PC-3 (cell line): ENCODE measurements at regions of chrX and their contacts with region 1.

Region 1: GRCh38 chrX:41923257-41923969 is at the start of gene CASK:
- DNase-seq: peak; percentile 91
- ATAC-seq: peak; percentile 84
- H3K4me3 ChIP-seq: peak within 1 kb of the TSS; percentile 98
- H3K27ac ChIP-seq: peak within 1 kb of the TSS; percentile 56
- H3K4me1 ChIP-seq: no peaks in the 10 kb centered on the region; the same call in 1 of the 2 replicates
- H3K27me3 ChIP-seq: no peaks in the 10 kb centered on the region
- CTCF ChIP-seq: no peak
- total RNA-seq, gene CASK: 21.4 and 24.8 TPM in 2 replicates

Region 2: DNA sequence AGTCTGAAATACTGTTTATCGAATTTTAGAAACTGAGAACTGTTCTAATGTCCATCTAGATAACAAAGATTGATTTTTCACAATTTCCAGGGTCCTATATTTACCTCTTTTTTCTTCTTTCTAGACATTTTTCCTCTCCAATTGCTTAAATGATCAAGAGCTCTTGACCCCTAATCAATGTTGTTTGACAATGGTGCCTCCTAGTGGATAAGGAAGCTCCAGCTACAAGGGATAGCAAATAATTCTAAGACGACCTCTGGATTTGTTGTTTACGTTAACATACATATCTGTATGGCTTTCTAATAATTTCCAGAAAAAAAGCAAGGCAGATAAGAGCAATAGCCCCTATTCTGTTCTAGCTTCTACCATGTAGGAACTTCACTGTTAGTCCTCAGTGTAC is 163.6 kb before region 1 on chrX:
- CTCF ChIA-PET with region 1: no interaction called
- POLR2A ChIA-PET with region 1: no interaction called
- intact Hi-C with region 1: loop called (anchors 5 kb)
- DNase-seq: peak; percentile 39
- ATAC-seq: no peak
- H3K4me3 ChIP-seq: no peak overlapping the region
- H3K27ac ChIP-seq: no peak overlapping the region
- H3K4me1 ChIP-seq: peaks cover 34% of the 10 kb centered on the region
- H3K27me3 ChIP-seq: no peaks in the 10 kb centered on the region
- CTCF ChIP-seq: peak; percentile 68

Region 3: GRCh38 chrX:41837270-41837944 is 86.0 kb before region 1 on chrX:
- CTCF ChIA-PET with region 1: no interaction called
- POLR2A ChIA-PET with region 1: no interaction called
- intact Hi-C with region 1: no loop called
- DNase-seq: no peak
- ATAC-seq: no peak
- H3K4me3 ChIP-seq: no peak overlapping the region
- H3K27ac ChIP-seq: no peak overlapping the region
- H3K4me1 ChIP-seq: peaks cover 7% of the 10 kb centered on the region
- H3K27me3 ChIP-seq: no peaks in the 10 kb centered on the region
- CTCF ChIP-seq: no peak